Kidney (tissue), 22 donors: ENCODE measurements at regions of chr1 and their contacts with region 1.

Region 1: DNA sequence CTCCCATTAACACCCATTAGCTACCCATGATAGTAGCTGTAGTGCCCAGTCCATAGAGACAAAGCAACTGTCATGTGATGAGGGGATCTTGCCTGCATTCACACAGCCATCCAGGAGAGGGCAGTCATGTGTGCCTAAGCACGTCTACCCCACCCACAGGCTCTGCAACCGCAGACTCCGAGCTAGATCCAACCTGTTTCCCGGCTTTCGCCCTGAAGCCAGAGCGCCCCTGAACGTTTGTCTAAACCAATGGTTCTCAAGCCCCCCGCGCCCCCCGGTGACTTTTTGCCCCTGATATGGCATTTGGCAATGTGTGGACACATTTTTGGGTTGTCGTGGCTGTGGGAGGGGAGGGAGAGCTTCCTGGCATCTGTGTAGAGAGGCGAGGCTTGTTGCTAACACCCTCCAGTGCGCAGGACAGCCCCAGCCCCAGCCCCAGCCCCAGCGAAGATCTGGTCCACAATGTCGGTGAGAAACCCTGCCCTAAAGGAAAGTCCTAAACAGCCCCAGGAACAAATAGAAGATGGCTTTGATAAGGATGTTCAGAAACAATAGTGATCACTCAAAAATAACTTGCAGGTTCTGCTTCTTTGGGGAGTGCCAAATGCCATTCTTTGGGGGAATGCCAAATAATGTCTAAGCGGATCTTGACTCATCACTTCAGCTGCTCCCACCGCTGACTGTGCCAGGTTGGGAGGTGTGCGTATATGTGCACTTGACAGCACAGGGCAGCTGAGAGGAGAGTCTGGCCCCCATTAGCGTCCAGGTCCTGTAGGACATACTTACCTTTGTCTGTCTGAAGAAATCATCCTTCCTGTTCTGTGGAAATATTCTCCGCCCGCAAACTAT is 34.5 kb downstream of the SLC44A3 start:
- DNase-seq: peak; percentile 86 to 95 (median 92)
- H3K4me3 ChIP-seq: peak overlapping the region in 2 of 3 donors; percentile 44 to 55
- H3K27ac ChIP-seq: peak overlapping the region; percentile 60 to 89
- H3K4me1 ChIP-seq: peaks cover 0 to 24% (median 16%) of the 10 kb centered on the region in 3 donors
- H3K27me3 ChIP-seq: no peaks in the 10 kb centered on the region
- CTCF ChIP-seq: peak; percentile 99

Region 2: DNA sequence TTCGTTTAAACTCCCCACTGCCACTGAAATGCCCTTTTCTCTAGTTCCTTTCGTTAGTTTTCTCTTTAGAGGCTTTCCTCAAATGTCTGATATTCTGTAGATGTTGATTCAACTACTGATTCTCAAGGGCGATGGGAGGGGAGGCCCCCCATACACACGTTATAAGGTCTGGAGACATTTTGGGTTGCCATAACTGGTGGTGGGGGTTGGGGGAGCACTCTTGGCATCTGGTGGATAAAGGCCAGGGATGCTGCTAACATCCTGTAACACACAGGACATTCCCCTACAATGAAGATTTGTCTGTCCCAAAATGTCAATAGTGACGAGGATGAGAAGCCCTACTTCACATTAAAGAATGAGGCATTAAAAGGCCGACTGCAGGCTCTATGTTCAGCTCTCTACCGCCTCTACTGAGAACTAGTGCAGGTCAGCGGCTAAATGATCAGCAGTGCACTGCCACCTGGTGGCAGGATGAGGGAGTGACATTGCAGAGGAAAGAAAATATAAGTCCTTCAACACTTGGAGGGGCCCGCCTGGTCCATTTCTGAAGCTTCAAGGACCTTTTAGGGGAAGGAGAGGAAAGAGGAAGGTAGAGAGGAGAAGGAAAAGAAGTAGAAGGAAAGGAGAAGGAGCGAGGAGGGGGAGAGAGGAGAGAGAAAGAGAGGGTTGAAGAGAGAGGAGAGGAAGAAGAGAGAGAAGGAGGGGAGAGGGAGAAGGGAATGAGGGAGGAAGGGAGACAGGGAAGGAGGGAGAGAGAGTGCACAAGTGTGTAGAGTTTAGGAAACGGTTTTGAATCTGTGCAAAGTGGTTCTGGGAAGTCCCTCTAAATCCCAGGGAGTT is 188.7 kb after region 1 on chr1:
- intact Hi-C with region 1: loop called (anchors 5 kb)
- DNase-seq: peak; percentile 80 to 94 (median 90)
- H3K4me3 ChIP-seq: no peak overlapping the region
- H3K27ac ChIP-seq: peak overlapping the region in 1 of 2 donors; percentile 26
- H3K4me1 ChIP-seq: peaks cover 0 to 5% (median 4%) of the 10 kb centered on the region in 3 donors
- H3K27me3 ChIP-seq: no peaks in the 10 kb centered on the region
- CTCF ChIP-seq: peak; percentile 100